PC-9 (cell line): ENCODE measurements at regions of chr7 and their contacts with region 1.

Region 1: DNA sequence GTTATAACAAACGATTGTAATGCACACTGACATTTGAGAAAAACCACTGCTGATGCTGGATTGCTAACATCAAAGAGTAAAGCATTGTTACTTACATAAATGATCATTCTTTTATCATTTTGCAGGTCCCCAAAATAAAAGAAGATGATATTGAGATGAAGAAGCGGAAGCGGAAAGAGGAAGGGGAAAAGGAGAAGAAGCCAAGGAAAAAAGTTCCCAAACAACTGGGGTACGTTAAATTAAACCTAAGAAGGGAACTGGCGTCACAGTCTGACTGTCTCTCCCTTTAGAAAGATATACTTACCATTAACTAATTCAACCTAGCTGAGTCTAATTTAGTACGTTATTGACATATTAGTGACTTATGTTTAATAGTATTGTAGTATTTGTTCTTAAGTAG is 28.1 kb downstream of the UBN2 start:
- DNase-seq: no peak
- H3K4me3 ChIP-seq: no peak overlapping the region
- H3K27ac ChIP-seq: no peak overlapping the region
- H3K4me1 ChIP-seq: no peaks in the 10 kb centered on the region
- H3K27me3 ChIP-seq: no peaks in the 10 kb centered on the region
- CTCF ChIP-seq: no peak

Region 2: DNA sequence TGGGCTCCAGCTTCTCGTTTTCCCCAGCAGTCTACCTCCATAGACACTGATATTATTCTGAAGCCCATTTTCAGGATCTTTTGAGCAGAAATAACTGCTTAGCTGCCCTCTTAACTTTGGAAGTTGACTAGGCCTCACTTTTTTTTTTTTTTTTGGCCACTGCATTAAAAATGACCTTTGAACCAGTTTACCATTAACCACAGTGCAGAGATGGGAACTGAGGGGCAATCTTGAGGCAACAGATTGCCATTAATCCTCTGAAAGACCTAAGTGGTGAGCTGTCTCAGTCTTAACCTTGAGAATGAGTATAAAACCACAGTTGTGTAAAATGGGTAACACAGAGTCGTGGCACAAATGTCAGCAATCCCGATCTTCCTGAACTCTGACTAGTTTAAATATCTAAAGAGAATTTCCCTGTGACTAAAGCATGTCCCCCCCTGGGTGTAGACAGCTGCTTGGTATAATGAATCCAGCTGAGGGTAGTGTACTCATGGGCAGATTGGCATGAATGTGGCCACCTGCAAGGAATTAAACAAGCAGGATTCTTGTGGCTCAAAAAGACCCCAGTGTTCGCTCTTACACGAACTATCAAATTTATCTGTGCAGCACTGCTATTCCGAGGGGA is 35.9 kb after region 1 on chr7:
- CTCF ChIA-PET with region 1: no interaction called
- POLR2A ChIA-PET with region 1: no interaction called
- intact Hi-C with region 1: loop called (anchors 5 kb)
- DNase-seq: no peak
- H3K4me3 ChIP-seq: no peak overlapping the region
- H3K27ac ChIP-seq: no peak overlapping the region
- H3K4me1 ChIP-seq: no peaks in the 10 kb centered on the region
- H3K27me3 ChIP-seq: no peaks in the 10 kb centered on the region
- CTCF ChIP-seq: no peak

Region 3: DNA sequence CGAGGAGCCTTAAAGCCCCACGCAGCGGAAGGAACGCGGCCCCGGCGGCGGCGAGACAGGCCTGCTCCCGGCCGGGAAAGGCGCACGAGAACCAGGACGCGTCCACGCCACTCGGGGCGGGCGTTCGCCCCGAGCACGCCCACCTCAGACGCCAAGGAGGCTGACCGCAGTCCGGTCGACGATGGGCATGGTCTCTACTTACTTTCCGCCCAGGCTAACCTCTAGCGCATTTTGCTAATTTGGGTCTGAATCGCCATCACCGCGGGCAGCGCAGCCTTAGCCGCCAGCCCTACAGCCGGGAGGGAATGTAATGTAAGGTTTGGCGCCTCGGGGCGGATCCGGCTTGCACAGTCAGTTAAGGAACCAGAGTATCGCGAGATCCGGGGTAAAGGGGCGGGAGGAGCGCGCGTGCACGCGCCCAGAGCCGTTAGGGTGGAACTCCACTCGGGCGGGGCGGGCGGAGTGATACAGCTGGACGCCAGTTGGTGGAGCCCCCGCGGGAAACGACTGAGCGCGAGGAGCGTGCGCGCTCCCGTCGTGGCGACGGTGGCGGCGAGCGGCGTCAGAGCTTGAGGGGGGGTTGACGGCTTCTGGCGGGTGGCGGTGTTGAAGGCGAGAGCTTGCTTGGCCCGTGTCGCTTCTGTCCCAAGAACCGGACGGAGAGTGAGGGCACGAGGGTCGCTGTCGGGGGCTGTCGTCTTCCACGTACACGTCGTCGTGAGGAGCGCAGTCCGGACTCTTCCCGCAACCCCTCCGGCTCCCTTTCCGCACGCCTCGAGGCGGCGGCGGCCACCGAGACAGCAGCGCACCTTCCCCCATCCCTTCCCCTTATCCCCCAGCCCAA is 100.4 kb after region 1 on chr7 and contains the start of gene LUC7L2:
- CTCF ChIA-PET with region 1: no interaction called
- POLR2A ChIA-PET with region 1: no interaction called
- intact Hi-C with region 1: no loop called
- DNase-seq: peak; percentile 97 to 100
- H3K4me3 ChIP-seq: peak within 1 kb of the TSS; percentile 89
- H3K27ac ChIP-seq: peak within 1 kb of the TSS; percentile 97
- H3K4me1 ChIP-seq: peaks cover 27% of the 10 kb centered on the region
- H3K27me3 ChIP-seq: no peaks in the 10 kb centered on the region
- CTCF ChIP-seq: peak; percentile 4; the same call in 1 of the 2 replicates
- total RNA-seq, gene LUC7L2: 111 and 149 TPM in 2 replicates

Region 4: DNA sequence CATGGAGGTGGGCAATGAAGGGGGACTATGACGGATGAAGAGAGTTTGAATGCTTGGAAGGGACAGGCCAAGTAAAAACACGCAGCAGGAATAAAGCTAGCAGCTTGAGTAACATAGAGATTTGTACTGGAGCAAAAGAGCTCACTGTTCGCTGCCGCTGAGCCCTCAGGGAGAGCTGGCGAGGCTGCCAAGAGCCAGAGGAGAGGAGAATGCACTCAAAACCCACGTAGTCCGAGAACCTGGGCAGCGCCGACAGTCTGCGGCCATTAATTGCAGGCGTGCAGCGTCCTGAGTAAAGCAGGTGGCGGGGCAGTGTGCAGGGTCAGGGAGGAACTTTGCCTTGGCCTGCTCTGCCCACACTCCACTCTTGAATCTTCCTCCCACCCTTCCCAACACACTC is 1071.0 kb after region 1 on chr7:
- CTCF ChIA-PET with region 1: no interaction called
- POLR2A ChIA-PET with region 1: no interaction called
- intact Hi-C with region 1: no loop called
- DNase-seq: no peak
- H3K4me3 ChIP-seq: no peak overlapping the region
- H3K27ac ChIP-seq: no peak overlapping the region
- H3K4me1 ChIP-seq: no peaks in the 10 kb centered on the region
- H3K27me3 ChIP-seq: no peaks in the 10 kb centered on the region
- CTCF ChIP-seq: no peak